AG04450 (cell line): ENCODE measurements at regions of chr6 and their contacts with region 1.

Region 1: GRCh38 chr6:107847844-107848802 is 24.0 kb upstream of the SCML4 start:
- DNase-seq: peak; percentile 51
- H3K4me3 ChIP-seq: peak overlapping the region; percentile 68
- H3K27ac ChIP-seq: no peak overlapping the region
- H3K27me3 ChIP-seq: peaks cover 8% of the 10 kb centered on the region
- CTCF ChIP-seq: peak; percentile 91

Region 2: GRCh38 chr6:107657755-107658461 is 190.2 kb before region 1 on chr6:
- CTCF ChIA-PET with region 1: interaction called, 10 read pairs
- POLR2A ChIA-PET with region 1: no interaction called
- DNase-seq: peak; percentile 64
- H3K4me3 ChIP-seq: peak overlapping the region; percentile 43
- H3K27ac ChIP-seq: peak overlapping the region; percentile 34
- H3K27me3 ChIP-seq: no peaks in the 10 kb centered on the region
- CTCF ChIP-seq: peak; percentile 58

Region 3: DNA sequence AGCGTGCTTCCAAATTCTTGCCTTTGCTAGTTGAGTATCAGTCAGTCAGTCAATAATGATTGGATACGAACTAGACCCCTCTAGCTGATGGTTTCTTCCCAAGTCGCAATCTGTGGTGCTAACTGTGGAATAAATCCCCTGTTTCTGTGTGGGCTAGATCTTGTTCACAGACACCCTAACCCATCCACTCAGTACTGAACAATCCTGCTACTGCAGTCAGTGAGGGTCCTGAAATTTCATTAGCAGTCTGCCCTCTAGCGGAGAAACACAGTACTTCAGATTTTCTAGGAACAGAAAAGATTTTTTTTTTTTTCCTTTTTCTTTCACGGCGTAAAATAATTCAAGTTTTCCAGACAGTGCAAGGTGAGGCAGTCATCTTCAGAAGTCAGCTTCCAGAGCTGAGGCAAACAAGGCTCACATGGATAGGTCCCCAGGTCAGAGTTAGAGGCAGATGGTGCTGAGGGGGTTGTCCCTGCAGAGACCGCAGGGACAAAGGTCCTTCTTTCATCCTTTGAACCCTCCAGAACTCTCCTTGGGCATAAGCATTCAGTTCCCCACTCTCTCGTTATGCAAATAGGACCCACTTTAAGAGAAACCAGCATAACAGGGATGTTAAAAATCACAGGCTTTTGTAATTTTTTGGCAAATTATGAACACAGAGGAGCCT is 143.6 kb before region 1 on chr6:
- CTCF ChIA-PET with region 1: interaction called, 10 read pairs
- POLR2A ChIA-PET with region 1: no interaction called
- DNase-seq: no peak
- H3K4me3 ChIP-seq: no peak overlapping the region; the same call in 1 of the 2 replicates
- H3K27ac ChIP-seq: no peak overlapping the region
- H3K27me3 ChIP-seq: no peaks in the 10 kb centered on the region
- CTCF ChIP-seq: peak; percentile 82

Region 4: GRCh38 chr6:107866606-107867301 is 18.6 kb after region 1 on chr6:
- CTCF ChIA-PET with region 1: interaction called, 16 read pairs
- POLR2A ChIA-PET with region 1: no interaction called
- DNase-seq: no peak
- H3K4me3 ChIP-seq: no peak overlapping the region
- H3K27ac ChIP-seq: no peak overlapping the region
- H3K27me3 ChIP-seq: peaks cover 3% of the 10 kb centered on the region
- CTCF ChIP-seq: peak; percentile 57

Region 5: DNA sequence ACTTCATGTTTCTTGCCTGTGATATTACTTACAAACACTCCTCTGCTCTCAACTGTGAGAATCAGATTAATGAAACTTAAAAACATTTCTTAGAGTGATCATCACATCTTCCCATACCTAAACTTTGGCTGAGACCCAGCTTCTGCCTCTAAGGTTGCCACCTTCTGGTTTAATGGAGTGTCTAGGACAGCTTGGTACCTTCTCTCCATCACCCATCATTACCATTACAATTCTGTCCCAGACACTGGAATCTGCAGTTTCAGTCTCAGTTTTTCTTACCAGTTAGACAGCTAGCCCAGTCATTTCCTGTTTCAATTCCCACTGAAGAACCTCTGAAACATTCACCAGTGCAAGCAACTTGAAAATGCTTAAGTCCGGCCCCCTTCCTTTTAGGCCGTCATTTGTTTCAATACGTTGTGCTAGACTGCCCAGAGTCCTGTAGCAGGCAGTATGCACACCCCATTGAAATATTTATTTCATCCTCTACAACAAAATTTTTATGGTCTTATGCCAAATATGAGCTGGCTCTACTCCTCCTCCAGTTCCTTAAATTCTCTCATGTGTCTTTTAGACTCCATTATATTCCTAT is 605.6 kb after region 1 on chr6:
- CTCF ChIA-PET with region 1: no interaction called
- POLR2A ChIA-PET with region 1: no interaction called
- DNase-seq: peak; percentile 11
- H3K4me3 ChIP-seq: no peak overlapping the region
- H3K27ac ChIP-seq: no peak overlapping the region
- H3K27me3 ChIP-seq: no peaks in the 10 kb centered on the region
- CTCF ChIP-seq: no peak

Region 6: DNA sequence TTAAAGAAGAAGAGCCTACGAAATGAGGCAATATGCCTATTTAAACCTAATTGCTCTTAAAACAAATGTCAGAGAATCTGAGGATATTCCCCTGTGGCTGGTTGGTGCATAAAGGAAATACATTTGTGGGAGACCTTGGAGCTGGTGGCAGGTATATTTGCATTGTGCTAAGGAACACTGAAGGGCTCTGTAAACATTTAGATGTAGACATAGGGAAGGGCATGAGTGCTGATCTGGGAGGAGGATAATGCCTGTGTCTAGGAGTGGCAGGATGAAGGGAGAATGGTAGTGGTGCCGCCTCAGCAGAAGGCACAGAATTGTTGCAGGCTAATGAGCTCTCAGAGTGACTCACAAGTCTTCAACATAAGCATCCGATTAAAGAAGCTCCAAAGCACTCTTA is 1448.3 kb after region 1 on chr6:
- CTCF ChIA-PET with region 1: no interaction called
- POLR2A ChIA-PET with region 1: no interaction called
- DNase-seq: no peak
- H3K4me3 ChIP-seq: no peak overlapping the region
- H3K27ac ChIP-seq: no peak overlapping the region
- H3K27me3 ChIP-seq: peaks cover 3% of the 10 kb centered on the region
- CTCF ChIP-seq: no peak